Activated naive CD4-positive, alpha-beta T cell treated with anti-CD3 and anti-CD28 coated beads for 36 hours (primary cell): ENCODE measurements at regions of chr7 and their contacts with region 1.

Region 1: GRCh38 chr7:30740424-30741181 is 11.3 kb upstream of the INMT start:
- DNase-seq: peak; percentile 85
- H3K4me3 Mint-ChIP-seq: no peak overlapping the region
- H3K27ac Mint-ChIP-seq: no peak overlapping the region
- H3K4me1 Mint-ChIP-seq: peaks cover 29% of the 10 kb centered on the region
- H3K27me3 Mint-ChIP-seq: no peaks in the 10 kb centered on the region

Region 2: DNA sequence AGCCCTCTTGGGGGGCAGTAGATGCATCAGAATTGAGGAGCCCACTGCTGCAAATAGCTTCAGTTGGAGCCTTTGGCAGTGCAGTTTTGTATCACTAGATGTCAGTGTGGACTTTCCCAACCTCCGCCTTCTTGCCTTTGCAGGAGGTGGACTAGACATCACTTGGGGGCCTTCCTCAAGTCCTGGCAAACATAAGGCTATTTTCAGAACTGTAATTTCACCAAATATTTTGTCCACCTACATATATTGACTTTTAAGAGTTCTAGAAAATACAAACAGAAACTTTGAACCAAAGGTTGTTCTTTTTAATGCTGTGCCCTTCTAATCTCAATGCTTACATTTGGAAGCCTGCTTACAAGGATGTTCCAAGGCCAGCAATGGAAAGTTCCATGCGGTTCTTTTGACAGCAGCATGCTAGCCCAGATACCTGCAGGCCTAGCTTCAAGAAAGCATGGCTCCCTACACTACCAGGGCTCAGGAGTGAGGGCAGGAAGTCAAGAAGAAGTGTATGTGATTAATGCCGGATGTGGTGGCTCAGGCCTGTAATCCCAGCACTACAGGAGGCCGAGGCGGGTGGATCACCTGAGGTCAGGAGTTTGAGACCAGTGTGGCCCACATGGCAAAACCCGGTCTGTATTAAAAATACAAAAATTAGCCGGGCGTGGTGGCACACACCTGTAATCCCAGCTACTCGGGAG is 464.3 kb before region 1 on chr7:
- CTCF ChIA-PET with region 1: no interaction called
- intact Hi-C with region 1: loop called (anchors 2 kb)
- DNase-seq: peak; percentile 75
- H3K4me3 Mint-ChIP-seq: no peak overlapping the region
- H3K27ac Mint-ChIP-seq: no peak overlapping the region
- H3K4me1 Mint-ChIP-seq: peaks cover 5% of the 10 kb centered on the region
- H3K27me3 Mint-ChIP-seq: no peaks in the 10 kb centered on the region

Region 3: GRCh38 chr7:30548762-30549344 is 191.8 kb before region 1 on chr7:
- CTCF ChIA-PET with region 1: interaction called, 20 read pairs
- intact Hi-C with region 1: loop called (anchors 1 kb)
- DNase-seq: peak; percentile 52
- H3K4me3 Mint-ChIP-seq: no peak overlapping the region
- H3K27ac Mint-ChIP-seq: no peak overlapping the region
- H3K4me1 Mint-ChIP-seq: no peaks in the 10 kb centered on the region
- H3K27me3 Mint-ChIP-seq: no peaks in the 10 kb centered on the region

Region 4: DNA sequence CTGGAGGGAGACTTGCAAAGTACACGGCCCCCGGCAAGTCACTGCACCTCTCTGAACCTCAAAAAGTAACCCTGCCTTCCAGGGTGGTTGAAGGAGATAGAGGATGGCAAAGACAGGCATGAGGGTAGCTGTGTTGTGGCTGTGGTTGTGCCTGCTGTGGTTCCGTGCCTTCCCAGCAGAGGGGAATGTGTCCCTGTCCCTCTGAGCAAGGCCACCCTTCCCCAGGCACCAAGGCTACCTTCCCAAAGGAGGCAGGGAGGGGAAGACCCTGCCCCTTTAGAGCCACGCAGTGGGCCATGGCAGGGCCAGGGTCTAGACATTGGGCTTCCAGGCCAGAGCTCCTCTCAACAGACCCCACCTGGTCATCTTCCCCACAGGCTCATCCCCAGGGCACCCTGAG is 77.2 kb before region 1 on chr7:
- CTCF ChIA-PET with region 1: interaction called, 19 read pairs
- intact Hi-C with region 1: no loop called
- DNase-seq: no peak
- H3K4me3 Mint-ChIP-seq: no peak overlapping the region
- H3K27ac Mint-ChIP-seq: no peak overlapping the region
- H3K4me1 Mint-ChIP-seq: no peaks in the 10 kb centered on the region
- H3K27me3 Mint-ChIP-seq: no peaks in the 10 kb centered on the region

Region 5: DNA sequence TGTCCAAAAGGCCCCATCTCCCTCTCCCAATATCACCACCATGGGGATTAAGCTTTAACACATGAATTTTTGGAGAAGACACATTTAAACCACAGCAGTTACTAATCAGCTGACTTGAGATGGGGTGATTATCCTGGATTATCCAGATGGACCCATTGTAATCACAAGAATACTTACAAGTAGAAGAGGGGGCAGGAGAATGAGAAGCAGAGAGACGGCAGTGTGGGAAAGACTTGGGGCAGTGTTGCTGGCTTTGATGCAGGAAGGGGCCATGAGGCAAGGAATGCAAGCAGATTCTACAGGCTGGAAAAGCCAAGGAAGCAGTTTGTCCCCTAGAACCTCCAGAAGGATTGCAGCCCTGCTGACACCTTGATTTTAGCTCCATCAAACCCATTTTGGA is 19.4 kb before region 1 on chr7:
- CTCF ChIA-PET with region 1: interaction called, 56 read pairs
- intact Hi-C with region 1: no loop called
- DNase-seq: no peak
- H3K4me3 Mint-ChIP-seq: no peak overlapping the region
- H3K27ac Mint-ChIP-seq: no peak overlapping the region
- H3K4me1 Mint-ChIP-seq: peaks cover 7% of the 10 kb centered on the region
- H3K27me3 Mint-ChIP-seq: no peaks in the 10 kb centered on the region

Region 6: DNA sequence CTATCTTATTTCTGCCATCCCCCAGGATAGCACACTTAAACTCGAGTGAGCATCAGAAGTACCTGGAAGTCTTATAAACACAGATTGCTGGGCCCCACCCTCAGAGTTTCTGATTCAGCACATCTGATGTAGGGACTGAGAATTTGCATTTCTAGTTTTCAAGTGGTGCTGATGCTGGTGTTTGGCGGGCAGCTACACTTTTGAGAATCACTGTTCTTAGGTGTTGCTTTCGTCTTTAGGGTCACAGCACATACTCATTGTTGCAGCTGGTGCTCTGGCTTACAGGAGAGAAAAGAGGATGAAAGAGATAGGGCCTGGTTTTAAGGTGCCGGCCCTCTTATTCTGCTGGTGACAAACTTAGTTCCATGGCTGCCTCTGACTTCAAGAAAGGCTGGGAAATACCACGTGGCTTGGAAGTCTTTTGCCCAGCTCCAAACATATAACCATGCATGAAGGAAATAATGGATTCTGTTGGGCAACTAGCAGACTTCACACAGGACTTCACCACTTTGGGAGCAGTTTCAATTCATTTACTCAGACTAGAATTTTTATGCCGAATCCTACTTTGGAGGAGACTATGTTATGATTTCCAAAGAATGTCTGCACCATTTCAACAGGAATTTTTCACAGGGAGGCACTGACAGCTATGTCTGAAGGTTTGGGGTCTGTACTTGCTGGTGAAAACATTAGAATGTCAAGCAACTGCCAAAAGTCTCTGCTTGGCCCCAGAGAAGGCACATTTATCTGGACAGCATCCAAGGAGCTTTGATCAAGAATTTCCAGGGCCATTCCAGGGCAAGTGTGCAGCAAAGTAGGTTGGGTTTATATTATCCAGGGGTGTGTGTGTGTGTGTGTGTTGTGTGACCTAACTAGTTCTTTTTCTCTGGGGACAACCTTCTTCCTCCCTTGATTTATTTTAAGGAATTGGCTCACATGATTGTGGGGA is 23.7 kb after region 1 on chr7:
- CTCF ChIA-PET with region 1: interaction called, 10 read pairs
- intact Hi-C with region 1: no loop called
- DNase-seq: no peak
- H3K4me3 Mint-ChIP-seq: no peak overlapping the region
- H3K27ac Mint-ChIP-seq: no peak overlapping the region
- H3K4me1 Mint-ChIP-seq: no peaks in the 10 kb centered on the region
- H3K27me3 Mint-ChIP-seq: peaks cover 5% of the 10 kb centered on the region